H1 (cell line): ENCODE measurements at regions of chr3 and their contacts with region 1.

Region 1: GRCh38 chr3:79086514-79086913 is 681.3 kb downstream of the ROBO1 start:
- DNase-seq: peak; percentile 5 to 63
- H3K4me3 ChIP-seq: no peak overlapping the region
- H3K27ac ChIP-seq: no peak overlapping the region
- H3K4me1 ChIP-seq: peaks cover 0 to 4% (median 2%) of the 10 kb centered on the region in 4 experiments; a peak in 2 of 7 replicates
- H3K27me3 ChIP-seq: no peaks in the 10 kb centered on the region
- CTCF ChIP-seq: peak in 2 of 3 experiments; percentile 71 to 75; a peak in 3 of 4 replicates
- EP300 ChIP-seq: no peak
- POLR2A ChIP-seq: no peak
- RAD21 ChIP-seq: peak; percentile 76 to 79

Region 2: DNA sequence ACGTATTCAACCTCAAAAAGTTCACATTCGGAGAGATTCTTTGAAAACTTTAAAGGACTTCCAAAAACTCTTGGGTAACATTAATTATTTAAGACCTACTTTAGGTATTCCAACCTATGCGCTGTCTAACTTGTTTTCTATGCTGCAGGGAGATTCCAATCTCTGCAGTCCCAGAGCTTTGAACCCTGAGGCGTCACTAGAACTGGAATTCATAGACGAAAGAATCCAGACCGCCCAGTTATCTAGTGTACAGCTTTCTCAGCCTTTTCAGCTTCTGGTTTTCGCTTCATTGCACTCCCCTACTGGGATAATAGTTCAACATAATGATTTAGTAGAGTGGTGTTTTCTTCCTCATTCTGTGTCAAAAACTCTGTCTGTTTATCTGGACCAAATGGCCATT is 30.0 kb before region 1 on chr3:
- CTCF ChIA-PET with region 1: no interaction called
- POLR2A ChIA-PET with region 1: no interaction called
- DNase-seq: no peak
- H3K4me3 ChIP-seq: no peak overlapping the region
- H3K27ac ChIP-seq: no peak overlapping the region
- H3K4me1 ChIP-seq: no peaks in the 10 kb centered on the region
- H3K27me3 ChIP-seq: no peaks in the 10 kb centered on the region
- CTCF ChIP-seq: no peak
- EP300 ChIP-seq: no peak
- POLR2A ChIP-seq: no peak
- RAD21 ChIP-seq: no peak

Region 3: GRCh38 chr3:79103305-79103704 is 16.8 kb after region 1 on chr3:
- CTCF ChIA-PET with region 1: interaction called, 11 read pairs
- POLR2A ChIA-PET with region 1: no interaction called
- DNase-seq: no peak
- H3K4me3 ChIP-seq: no peak overlapping the region
- H3K27ac ChIP-seq: no peak overlapping the region
- H3K4me1 ChIP-seq: no peaks in the 10 kb centered on the region
- H3K27me3 ChIP-seq: no peaks in the 10 kb centered on the region
- CTCF ChIP-seq: no peak
- EP300 ChIP-seq: no peak
- POLR2A ChIP-seq: no peak
- RAD21 ChIP-seq: no peak

Region 4: DNA sequence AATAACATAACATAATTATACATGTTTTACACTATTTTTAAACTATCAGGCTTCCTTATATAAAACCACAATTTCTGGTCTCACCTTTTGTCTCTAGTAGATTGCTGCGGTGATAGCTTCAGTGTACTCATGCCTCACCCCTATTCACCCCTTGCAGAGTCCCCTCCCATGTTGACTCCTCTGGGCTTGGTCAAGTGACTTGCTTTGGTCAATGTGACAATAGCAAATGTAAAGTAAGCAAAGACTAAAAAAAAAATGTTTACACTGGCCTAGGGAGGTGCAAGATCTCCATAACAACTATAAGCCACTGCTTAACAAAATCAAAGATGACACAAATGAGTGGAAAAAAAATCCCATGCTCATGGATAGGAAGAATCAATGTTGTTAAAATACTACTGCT is 143.8 kb after region 1 on chr3:
- CTCF ChIA-PET with region 1: interaction called, 12 read pairs
- POLR2A ChIA-PET with region 1: no interaction called
- DNase-seq: no peak
- H3K4me3 ChIP-seq: no peak overlapping the region
- H3K27ac ChIP-seq: no peak overlapping the region
- H3K4me1 ChIP-seq: no peaks in the 10 kb centered on the region
- H3K27me3 ChIP-seq: no peaks in the 10 kb centered on the region
- CTCF ChIP-seq: no peak
- EP300 ChIP-seq: no peak
- POLR2A ChIP-seq: no peak
- RAD21 ChIP-seq: no peak

Region 5: GRCh38 chr3:79344876-79345871 is 258.7 kb after region 1 on chr3:
- CTCF ChIA-PET with region 1: interaction called, 13 read pairs
- POLR2A ChIA-PET with region 1: no interaction called
- DNase-seq: no peak
- H3K4me3 ChIP-seq: no peak overlapping the region
- H3K27ac ChIP-seq: no peak overlapping the region
- H3K4me1 ChIP-seq: no peaks in the 10 kb centered on the region
- H3K27me3 ChIP-seq: no peaks in the 10 kb centered on the region
- CTCF ChIP-seq: no peak
- EP300 ChIP-seq: no peak
- POLR2A ChIP-seq: no peak
- RAD21 ChIP-seq: no peak

Region 6: GRCh38 chr3:79354179-79354688 is 267.7 kb after region 1 on chr3:
- CTCF ChIA-PET with region 1: interaction called, 18 read pairs
- POLR2A ChIA-PET with region 1: no interaction called
- DNase-seq: no peak
- H3K4me3 ChIP-seq: no peak overlapping the region
- H3K27ac ChIP-seq: no peak overlapping the region
- H3K4me1 ChIP-seq: no peaks in the 10 kb centered on the region; a peak in 1 of 7 replicates
- H3K27me3 ChIP-seq: peaks cover 0 to 1% (median 0%) of the 10 kb centered on the region in 4 experiments; a peak in 1 of 7 replicates
- CTCF ChIP-seq: no peak
- EP300 ChIP-seq: no peak
- POLR2A ChIP-seq: no peak
- RAD21 ChIP-seq: no peak

Region 7: DNA sequence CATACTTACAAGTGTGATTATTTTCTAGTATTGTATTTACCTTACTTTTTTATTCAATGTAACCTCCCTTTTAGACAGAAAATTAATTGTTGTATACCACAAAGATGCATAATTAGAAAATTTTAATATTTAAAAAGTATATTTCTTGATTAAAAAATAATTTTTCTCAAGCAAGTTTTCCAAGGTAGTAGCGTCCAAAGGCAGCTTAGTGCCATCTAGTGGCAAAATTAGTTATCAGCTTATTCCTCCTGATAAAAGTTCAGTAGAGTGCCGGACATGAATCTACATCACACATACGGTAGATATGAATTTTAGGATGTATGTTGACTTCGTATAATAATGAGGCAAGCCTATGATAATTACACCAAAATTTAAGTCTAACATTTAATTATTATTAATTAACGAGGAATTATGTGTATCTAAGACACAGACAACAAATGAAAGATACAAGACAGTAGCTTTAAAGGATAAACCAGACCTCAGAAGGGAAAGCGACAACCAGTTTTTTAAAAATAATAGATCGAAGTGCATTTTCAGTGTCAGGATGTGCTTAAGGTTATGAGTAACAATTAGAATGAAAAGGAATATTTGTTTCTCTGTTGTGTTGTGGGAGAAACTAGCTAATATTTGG is 275.3 kb after region 1 on chr3:
- CTCF ChIA-PET with region 1: interaction called, 83 read pairs
- POLR2A ChIA-PET with region 1: no interaction called
- DNase-seq: no peak
- H3K4me3 ChIP-seq: no peak overlapping the region
- H3K27ac ChIP-seq: no peak overlapping the region
- H3K4me1 ChIP-seq: no peaks in the 10 kb centered on the region; a peak in 1 of 7 replicates
- H3K27me3 ChIP-seq: no peaks in the 10 kb centered on the region
- CTCF ChIP-seq: peak in 2 of 3 experiments; percentile 44 to 55; a peak in 2 of 4 replicates
- EP300 ChIP-seq: no peak
- POLR2A ChIP-seq: no peak
- RAD21 ChIP-seq: peak; percentile 81 to 85